GM10248 (cell line): ENCODE measurements at regions of chr12 and their contacts with region 1.

Region 1: DNA sequence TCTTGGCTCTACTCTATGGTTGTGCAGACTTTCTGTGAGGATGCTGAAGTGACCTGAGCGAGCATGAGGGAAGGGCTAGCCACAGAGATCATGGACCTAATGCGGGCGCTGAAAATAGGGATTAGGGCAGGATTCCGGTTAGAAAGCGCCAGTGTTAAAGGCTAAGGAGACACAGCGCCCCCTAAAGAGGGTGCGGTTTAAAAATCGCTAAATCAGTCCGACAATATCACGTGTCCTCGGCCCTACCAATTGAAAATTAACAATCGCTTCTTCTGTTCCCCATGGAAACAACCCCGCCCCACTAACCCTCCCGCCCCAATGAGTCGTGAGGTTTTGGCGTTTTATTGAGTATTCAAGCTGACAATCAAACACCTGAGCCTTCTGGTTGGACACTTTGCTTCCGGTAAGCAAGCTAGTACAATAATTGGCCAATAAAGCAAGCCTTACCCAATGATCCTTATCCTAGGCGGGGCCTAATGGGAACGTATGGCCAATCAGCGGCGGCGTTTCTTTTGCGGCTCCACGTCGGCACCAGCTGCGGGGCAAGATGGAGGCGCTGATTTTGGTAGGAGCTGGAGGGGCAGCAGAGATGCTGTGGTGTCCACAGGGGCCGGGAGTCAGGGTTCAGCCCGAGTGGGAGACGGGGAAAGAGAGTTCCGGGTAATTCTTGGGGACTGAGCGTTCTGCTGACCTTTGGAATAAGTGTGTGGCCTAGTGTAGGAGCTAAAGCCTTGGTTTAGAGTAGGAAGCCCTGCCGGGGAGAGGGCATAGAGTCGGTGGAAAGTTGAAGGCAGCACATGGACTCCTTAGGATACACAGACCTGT is at the start of gene COPZ1:
- DNase-seq: peak; percentile 92
- CTCF ChIP-seq: peak; percentile 72

Region 2: DNA sequence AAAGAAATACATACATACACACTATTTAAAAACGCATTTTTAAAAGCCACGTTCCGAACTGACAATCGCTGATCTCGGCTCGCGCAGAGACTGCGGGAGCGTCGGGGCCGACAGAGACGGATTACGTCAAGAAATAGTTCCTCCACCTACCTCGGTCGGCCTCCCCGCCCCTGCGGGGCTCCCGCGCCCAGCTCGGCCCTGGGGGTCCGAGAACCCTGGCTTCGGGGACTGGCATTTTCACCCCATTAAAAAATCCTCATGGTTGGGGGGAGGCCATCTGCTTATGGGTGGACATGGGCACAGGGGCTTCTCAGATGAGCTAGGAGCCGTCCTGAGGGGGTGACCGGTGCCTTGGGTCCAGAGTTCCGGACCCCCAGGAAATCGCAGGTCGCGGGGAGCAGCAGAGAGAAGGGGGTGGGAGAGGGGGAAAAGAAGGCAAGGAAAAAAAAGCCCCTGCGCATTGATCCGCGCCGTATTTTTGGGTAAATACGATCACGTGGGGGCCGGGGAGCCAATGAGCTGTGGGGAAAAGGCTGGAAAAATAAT is 325.2 kb before region 1 on chr12:
- CTCF ChIA-PET with region 1: no interaction called
- POLR2A ChIA-PET with region 1: no interaction called
- DNase-seq: no peak
- CTCF ChIP-seq: no peak

Region 3: DNA sequence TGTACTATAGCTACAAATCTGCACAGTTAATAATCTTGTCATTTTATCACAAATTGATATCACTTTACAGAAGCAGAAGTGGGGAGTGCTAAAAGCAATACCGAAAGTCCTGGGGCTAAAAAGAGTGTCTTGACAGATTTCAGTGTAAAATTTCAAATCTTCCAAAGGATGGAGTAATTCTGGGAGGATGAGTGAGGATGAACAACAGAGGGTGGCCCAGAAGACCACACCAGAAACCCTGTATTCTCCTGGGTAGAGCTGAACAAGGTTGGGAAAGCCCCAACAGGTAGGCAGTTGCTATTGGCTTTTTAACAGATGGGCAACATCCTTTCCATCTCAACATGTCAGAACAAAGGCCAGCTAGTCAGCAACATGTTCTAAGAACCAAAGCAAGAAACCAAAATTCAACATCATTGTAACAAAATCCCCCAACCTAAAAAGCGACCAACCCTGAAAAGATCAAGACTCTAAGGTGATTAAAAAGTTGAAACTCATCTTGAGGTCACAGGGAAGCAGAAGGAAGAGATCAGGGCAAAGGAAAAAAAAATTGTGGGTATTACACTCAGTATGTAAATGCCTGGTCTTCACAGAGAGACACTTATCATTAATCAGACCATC is 83.7 kb before region 1 on chr12:
- CTCF ChIA-PET with region 1: interaction called, 22 read pairs
- POLR2A ChIA-PET with region 1: no interaction called
- DNase-seq: no peak
- CTCF ChIP-seq: no peak

Region 4: GRCh38 chr12:54259194-54260011 is 65.4 kb before region 1 on chr12:
- CTCF ChIA-PET with region 1: interaction called, 11 read pairs
- POLR2A ChIA-PET with region 1: no interaction called
- DNase-seq: peak; percentile 82
- CTCF ChIP-seq: no peak

Region 5: GRCh38 chr12:54294152-54294952 is 30.5 kb before region 1 on chr12:
- CTCF ChIA-PET with region 1: interaction called, 51 read pairs
- POLR2A ChIA-PET with region 1: interaction called, 4 read pairs
- DNase-seq: peak; percentile 79
- CTCF ChIP-seq: peak; percentile 91

Region 6: DNA sequence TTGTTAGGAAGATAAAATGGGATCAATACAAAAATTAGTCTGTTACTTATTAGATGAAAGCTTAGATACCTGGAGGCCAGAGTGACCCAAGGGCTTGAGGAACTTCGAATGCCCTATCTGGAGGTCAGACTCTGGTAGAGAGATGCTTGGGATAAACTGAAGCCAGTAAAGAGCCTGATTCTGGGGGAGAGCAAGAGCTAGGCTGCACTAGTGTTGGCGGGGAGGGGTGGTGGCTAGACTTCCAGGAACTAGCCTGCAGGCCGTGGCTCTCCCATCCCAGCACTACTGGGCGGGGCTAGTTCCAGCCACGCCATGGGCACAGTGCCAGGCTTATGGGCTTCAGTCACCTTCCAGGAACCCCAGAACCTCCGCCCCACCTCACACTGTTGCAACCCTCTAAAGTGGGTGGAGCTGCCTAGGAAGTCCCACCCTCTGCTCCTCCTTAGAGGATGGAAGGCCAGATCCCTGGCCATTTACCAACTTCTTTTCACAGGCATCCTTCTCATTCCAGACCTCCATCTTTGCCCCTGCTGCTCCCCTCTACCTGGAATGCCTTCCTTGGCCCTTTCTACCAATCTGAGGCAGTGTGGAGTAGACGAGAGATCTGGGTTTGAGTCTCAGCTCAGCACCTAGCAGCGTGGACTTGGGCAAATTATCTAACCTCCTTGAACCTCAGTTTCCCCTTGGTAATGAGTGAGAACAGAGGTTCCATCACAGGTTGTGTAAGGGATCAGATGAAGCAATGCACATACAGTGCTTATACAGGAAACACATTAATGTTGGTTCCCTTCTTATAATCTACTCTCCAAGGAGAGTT is 17.7 kb before region 1 on chr12:
- CTCF ChIA-PET with region 1: interaction called, 59 read pairs
- POLR2A ChIA-PET with region 1: no interaction called
- DNase-seq: no peak
- CTCF ChIP-seq: no peak

Region 7: DNA sequence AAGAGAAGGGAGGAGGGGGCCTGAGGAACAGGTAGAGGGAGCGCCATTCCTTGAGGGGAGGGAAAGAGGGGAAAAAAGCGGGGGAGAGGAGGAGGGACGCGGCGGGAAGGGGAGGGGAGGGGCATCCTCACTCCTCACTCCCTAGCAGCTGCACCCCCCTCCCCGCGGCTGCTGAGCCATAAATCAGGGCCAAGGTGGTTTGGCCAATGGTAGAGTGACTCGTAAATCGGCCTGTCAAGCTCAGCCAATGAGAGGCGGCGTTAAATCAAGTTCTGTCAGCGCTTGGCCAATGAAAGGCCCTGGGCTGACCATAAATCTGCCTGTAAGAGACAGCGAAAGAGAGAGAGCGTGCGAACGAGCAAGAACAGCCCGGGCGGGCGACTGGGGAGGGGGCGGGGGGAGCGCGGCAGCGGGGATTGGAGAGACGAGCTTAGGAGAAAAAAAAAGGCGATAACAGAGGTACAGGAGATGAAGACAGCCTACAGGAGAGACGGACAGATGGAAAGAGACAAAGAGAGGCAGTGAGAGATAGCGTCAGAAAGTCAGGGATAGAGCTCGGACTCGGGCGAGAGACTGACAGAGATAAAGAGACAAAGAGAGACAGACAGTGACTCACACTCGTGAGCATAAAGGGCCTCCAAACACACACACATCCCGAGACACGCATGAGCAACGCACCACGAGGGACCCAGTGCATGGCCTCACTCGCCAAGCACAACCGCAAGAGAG is 34.4 kb after region 1 on chr12:
- CTCF ChIA-PET with region 1: interaction called, 32 read pairs
- POLR2A ChIA-PET with region 1: interaction called, 5 read pairs
- DNase-seq: peak; percentile 97
- CTCF ChIP-seq: no peak

Region 8: DNA sequence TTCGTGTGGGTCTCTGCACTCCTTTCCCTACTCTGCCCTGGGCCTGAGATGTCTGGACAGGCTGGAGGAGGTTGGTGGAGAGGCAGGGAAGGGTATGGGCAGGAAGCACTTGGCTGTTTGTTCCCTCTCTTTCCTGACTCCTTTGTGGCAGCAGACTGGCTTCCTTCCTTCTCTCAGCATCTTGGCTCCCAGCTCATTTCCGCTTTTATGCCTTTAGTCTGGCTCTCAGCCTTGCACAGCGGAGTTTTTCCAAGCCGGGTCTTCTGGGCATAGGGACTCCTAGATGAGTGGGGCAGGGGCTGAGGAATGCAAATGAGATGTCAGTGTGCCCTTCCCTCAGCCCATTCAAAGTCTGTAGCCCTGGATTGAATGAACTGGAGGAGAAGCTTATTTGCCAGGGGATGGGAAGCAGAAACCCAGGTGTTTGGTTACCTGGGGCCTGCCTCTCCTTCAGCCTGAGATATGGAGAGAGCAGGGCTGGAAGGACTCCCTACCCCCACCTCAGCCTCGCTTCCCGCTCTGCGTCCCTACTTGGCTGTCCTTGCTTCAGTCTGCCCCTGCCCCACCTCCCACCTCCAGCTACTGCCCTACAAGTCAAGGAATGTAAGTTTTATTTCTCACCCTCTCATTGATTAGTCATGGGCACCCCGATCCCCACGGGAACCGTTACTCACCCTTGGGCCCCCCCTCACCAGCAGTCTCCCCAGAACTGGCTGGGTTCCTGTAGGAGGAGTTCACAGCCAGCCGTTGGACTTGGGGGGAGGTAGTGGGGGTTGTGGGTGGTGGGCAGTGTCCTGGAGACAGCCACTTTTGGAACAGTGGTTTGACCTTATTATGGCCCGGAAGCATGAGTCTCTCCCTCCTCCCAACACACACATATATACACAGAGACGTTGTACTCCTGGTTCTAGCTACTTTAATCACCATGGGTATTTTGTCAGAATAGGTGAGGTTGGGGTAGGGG is 103.5 kb after region 1 on chr12:
- CTCF ChIA-PET with region 1: no interaction called
- POLR2A ChIA-PET with region 1: no interaction called
- DNase-seq: no peak
- CTCF ChIP-seq: no peak